ENCODE measurements at regions of chr12 and their contacts with region 1.

Region 1: DNA sequence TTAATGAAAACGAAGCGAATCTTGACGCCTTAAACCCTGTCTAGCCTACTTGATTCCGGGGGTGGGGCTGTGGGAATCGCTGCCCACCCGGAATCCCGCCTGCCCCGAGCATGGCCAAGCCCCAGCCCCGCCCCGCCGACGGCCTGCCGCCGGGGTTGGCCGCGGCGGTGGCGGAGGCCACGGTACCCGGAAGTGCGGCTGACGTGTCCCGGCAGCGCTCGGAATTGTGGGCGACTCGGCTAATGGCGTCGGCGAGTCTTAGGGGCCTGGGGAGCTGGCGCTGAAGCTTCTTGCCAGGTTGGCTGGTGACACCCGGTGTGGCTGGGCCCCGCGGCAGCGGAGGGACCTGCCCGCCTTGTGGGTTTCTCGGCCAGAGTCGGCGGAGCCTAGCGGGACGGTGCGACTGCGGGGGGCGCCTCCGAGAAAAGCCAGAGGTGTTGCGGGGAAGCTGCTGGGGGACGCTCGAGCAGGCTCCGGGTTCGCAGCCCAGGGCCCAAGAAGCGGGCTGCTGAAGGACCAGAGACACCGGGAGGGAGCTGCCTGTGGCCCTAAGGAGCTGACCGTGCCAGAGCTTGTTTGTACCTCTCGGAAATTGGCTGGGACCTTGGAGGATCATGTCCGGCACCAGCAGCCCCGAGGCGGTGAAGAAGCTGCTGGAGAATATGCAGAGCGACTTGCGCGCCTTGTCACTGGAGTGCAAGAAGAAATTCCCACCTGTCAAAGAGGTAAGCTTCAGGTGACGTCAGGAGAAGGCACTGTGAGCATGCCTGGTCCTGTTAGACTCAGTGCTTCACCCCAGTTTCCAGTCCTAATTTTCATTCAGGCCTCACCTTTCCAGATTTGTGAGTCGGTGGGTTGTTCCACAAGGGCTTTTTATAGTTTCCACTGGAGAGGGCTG is at the start of gene MON2:
- DNase-seq: peak; percentile 74 to 77
- ATAC-seq: peak; percentile 94 to 98
- H3K4me3 ChIP-seq: peak within 1 kb of the TSS; percentile 84 to 95 (median 90)
- H3K27ac ChIP-seq: peak within 1 kb of the TSS; percentile 93 to 95 (median 94)
- H3K4me1 ChIP-seq: peaks cover 26 to 43% of the 10 kb centered on the region in 2 donors
- H3K27me3 ChIP-seq: no peaks in the 10 kb centered on the region
- CTCF ChIP-seq: no peak
- POLR2A ChIP-seq: peak; percentile 61 to 63
- total RNA-seq, gene MON2: 9.2 to 57.2 (median 12.9) TPM

Region 2: GRCh38 chr12:62435303-62436163 is 31.3 kb before region 1 on chr12:
- in situ Hi-C with region 1: no loop called
- intact Hi-C with region 1: loop called (anchors 2 kb)
- DNase-seq: no peak
- ATAC-seq: peak in 1 of 2 donors; percentile 26
- H3K4me3 ChIP-seq: peak overlapping the region; percentile 44 to 51 (median 48)
- H3K27ac ChIP-seq: no peak overlapping the region
- H3K4me1 ChIP-seq: peaks cover 4 to 6% of the 10 kb centered on the region in 2 donors
- H3K27me3 ChIP-seq: peaks cover 21 to 36% (median 23%) of the 10 kb centered on the region in 3 donors
- CTCF ChIP-seq: peak in 1 of 5 experiments; percentile 37
- POLR2A ChIP-seq: no peak

Region 3: GRCh38 chr12:62603061-62603810 is 136.4 kb after region 1 on chr12:
- in situ Hi-C with region 1: no loop called
- intact Hi-C with region 1: loop called (anchors 1 kb)
- DNase-seq: peak; percentile 74 to 80
- ATAC-seq: peak; percentile 84 to 88
- H3K4me3 ChIP-seq: peak overlapping the region; percentile 77 to 86 (median 82)
- H3K27ac ChIP-seq: peak overlapping the region; percentile 94 to 98 (median 97)
- H3K4me1 ChIP-seq: peaks cover 26 to 29% of the 10 kb centered on the region in 2 donors
- H3K27me3 ChIP-seq: no peaks in the 10 kb centered on the region
- CTCF ChIP-seq: peak; percentile 45 to 73 (median 63)
- POLR2A ChIP-seq: peak; percentile 25 to 54